H1 (cell line): ENCODE measurements at regions of chr13 and their contacts with region 1.

Region 1: GRCh38 chr13:38900188-38900587 is 90.4 kb downstream of the STOML3 start:
- DNase-seq: no peak
- H3K4me3 ChIP-seq: no peak overlapping the region
- H3K27ac ChIP-seq: no peak overlapping the region
- H3K4me1 ChIP-seq: no peaks in the 10 kb centered on the region
- H3K27me3 ChIP-seq: no peaks in the 10 kb centered on the region
- CTCF ChIP-seq: peak; percentile 22 to 66 (median 34)
- EP300 ChIP-seq: no peak
- POLR2A ChIP-seq: no peak
- RAD21 ChIP-seq: peak; percentile 40 to 60; a peak in 3 of 4 replicates

Region 2: DNA sequence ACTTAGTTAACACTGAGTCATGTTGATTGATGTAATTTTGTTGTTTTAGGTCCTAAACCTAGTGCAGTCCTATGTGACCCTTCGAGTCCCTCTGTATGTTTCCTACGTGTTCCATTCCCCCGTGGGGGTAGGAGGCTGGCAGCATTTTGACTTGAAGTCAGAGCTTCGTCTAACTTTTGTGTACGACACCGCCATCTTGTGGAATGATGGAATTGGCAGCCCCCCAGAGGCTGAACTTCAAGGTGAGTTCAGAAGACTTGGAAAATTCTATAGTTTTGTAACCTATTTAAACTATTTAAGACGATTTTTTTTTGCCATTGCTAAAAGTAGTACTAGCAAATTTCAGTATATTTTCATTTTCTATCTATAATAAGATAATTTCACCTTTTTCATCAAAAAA is 27.5 kb before region 1 on chr13:
- CTCF ChIA-PET with region 1: interaction called, 18 read pairs
- POLR2A ChIA-PET with region 1: no interaction called
- DNase-seq: peak; percentile 51 to 77
- H3K4me3 ChIP-seq: no peak overlapping the region
- H3K27ac ChIP-seq: no peak overlapping the region
- H3K4me1 ChIP-seq: no peaks in the 10 kb centered on the region
- H3K27me3 ChIP-seq: no peaks in the 10 kb centered on the region
- CTCF ChIP-seq: peak; percentile 57 to 95 (median 83)
- EP300 ChIP-seq: no peak
- POLR2A ChIP-seq: no peak
- RAD21 ChIP-seq: peak; percentile 78 to 85

Region 3: DNA sequence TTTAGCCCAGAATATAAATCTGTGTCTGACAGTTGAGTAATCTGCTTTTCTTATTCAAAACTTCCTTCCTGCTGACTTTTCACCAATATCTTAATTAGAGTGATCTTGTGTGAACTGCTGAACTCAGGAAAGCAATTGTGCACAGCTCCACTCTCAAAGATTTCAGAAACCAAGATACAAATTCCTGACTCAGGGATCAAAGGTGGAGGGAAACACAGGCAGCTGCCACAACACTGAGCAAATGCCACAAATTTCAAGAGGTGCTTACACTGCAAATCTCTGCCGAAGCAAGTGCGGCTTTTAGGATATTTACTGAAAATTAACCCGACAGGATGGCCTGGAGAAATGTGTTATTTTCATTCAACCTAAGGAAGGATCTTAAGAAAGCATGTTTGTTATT is 20.9 kb before region 1 on chr13:
- CTCF ChIA-PET with region 1: interaction called, 30 read pairs
- POLR2A ChIA-PET with region 1: interaction called, 3 read pairs
- DNase-seq: no peak
- H3K4me3 ChIP-seq: no peak overlapping the region
- H3K27ac ChIP-seq: no peak overlapping the region
- H3K4me1 ChIP-seq: no peaks in the 10 kb centered on the region
- H3K27me3 ChIP-seq: no peaks in the 10 kb centered on the region
- CTCF ChIP-seq: no peak
- EP300 ChIP-seq: no peak
- POLR2A ChIP-seq: no peak
- RAD21 ChIP-seq: no peak

Region 4: GRCh38 chr13:38888309-38888708 is 11.9 kb before region 1 on chr13:
- CTCF ChIA-PET with region 1: interaction called, 30 read pairs
- POLR2A ChIA-PET with region 1: no interaction called
- DNase-seq: peak in 1 of 2 experiments; percentile 10
- H3K4me3 ChIP-seq: no peak overlapping the region
- H3K27ac ChIP-seq: no peak overlapping the region
- H3K4me1 ChIP-seq: peaks cover 0 to 5% (median 1%) of the 10 kb centered on the region in 4 experiments; a peak in 1 of 7 replicates
- H3K27me3 ChIP-seq: no peaks in the 10 kb centered on the region
- CTCF ChIP-seq: no peak
- EP300 ChIP-seq: no peak
- POLR2A ChIP-seq: no peak
- RAD21 ChIP-seq: no peak

Region 5: DNA sequence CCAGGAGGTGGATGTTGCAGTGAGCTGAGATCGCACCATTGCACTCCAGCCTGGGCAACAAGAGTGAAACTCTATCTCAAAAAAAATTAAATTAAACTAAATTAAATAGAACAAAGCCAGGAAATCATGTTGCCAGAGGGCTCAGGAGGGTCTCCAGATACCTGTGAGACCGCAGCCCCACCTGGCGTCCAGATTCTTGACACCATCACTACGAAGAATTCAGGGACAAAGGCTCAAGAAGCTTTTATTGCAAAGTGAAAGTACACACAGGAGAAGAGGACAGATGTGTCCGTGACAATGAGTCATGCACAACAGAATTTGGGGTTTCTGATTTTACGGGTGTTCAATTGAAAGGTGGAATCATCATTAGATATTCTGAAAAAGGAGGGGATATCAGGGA is 13.9 kb after region 1 on chr13:
- CTCF ChIA-PET with region 1: interaction called, 21 read pairs
- POLR2A ChIA-PET with region 1: no interaction called
- DNase-seq: no peak
- H3K4me3 ChIP-seq: no peak overlapping the region
- H3K27ac ChIP-seq: no peak overlapping the region
- H3K4me1 ChIP-seq: no peaks in the 10 kb centered on the region
- H3K27me3 ChIP-seq: no peaks in the 10 kb centered on the region
- CTCF ChIP-seq: peak; percentile 5 to 21 (median 9); a peak in 3 of 4 replicates
- EP300 ChIP-seq: no peak
- POLR2A ChIP-seq: no peak
- RAD21 ChIP-seq: peak; percentile 41 to 56